ENCODE measurements at regions of chr18 and their contacts with region 1.

Region 1: GRCh38 chr18:74196220-74197119 is 48.1 kb downstream of the TIMM21 start:
- DNase-seq: peak in 1 of 2 donors; percentile 28
- ATAC-seq: peak; percentile 64

Region 2: DNA sequence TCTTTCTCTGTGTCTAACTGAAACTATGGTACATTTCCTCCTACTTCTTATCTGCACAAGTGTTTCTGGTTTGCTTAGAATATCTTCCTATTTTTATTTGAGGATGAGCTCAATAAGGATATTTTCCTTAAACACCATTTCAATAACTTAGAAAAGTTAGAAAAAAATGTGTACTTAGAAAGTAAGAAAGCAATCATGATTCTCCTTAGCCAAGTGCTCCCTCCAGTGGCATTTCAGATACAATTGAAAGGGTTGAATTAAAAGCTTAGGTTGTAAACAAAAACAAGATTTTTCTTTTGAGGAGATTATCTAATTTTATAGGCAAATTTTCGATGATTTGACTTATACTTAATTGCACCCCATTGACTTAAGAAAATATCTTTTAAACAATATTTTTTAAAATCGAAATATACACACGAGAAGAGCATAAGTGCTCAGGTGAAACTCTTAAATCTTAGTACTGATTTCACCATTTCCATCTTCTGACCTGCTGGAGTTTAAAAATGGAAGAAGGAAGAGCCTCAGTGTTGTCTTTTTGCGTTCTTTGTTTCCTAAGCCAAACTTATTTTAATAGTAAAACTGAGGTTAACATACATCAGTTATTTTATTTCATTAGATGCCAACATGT is 146.1 kb after region 1 on chr18:
- intact Hi-C with region 1: loop called (anchors 2 to 10 kb)
- DNase-seq: peak in 1 of 2 donors; percentile 19
- ATAC-seq: peak; percentile 54

Measured in left colon (tissue), 2 donors.